BJ (cell line): ENCODE measurements at regions of chr2 and their contacts with region 1.

Region 1: GRCh38 chr2:237581751-237582746 is 8.5 kb downstream of the RAB17 start:
- DNase-seq: no peak
- H3K4me3 ChIP-seq: 0 out of 2 replicates have a peak overlapping the region, but pooled peaks have one; percentile 15
- H3K27me3 ChIP-seq: peaks cover 3% of the 10 kb centered on the region; the same call in 1 of the 2 replicates
- CTCF ChIP-seq: peak; percentile 55

Region 2: GRCh38 chr2:237092920-237093781 is 488.9 kb before region 1 on chr2:
- CTCF ChIA-PET with region 1: interaction called, 3 read pairs
- POLR2A ChIA-PET with region 1: interaction called, 11 read pairs
- DNase-seq: no peak
- H3K4me3 ChIP-seq: no peak overlapping the region
- H3K27me3 ChIP-seq: no peaks in the 10 kb centered on the region
- CTCF ChIP-seq: peak; percentile 69

Region 3: DNA sequence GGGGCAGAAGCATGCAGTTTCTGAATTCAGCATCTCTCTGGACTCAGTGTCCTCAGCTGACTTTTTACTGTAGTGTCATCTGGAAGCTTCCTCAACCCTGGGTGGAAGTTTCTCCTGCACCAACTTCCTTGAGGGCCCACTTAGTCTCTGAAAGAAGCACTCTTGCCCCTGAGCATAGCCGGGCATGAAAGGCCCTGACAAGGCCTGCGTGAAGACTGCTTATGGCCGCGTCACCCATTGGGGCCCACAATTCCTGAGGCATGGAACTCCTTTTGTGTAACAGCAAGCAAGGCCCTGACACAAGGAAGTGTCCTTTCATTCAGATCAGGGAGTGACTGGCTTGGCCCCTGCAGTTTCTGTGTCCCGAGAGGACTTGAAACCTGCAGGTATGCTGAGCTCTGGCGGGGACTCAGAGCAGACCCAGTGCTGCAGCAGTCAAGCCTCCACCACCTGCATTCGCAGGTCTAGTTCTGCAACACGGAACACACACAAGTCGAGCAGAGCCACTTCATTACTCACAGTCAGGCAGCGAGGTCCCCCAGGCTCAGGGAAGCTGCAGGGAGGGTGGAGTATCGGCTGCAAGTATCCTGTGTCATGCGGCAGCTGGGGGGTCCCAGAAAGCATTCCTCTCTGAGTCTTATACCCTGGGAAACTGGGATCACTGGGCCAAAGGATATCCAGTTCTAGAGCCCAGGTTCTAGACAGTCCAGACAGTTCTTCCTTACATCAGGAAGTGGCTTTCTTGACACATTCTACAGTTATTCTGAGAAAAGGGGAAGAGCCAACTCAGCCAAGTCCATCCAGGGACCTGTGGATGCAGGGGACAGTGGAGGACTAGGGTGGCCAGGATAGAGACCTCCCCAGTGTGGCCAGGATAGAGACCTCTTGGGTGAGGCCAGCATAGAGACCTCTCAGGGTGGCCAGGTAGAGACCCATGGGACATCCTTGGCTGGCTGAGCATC is 51.3 kb before region 1 on chr2:
- CTCF ChIA-PET with region 1: no interaction called
- POLR2A ChIA-PET with region 1: no interaction called
- DNase-seq: no peak
- H3K4me3 ChIP-seq: no peak overlapping the region
- H3K27me3 ChIP-seq: no peaks in the 10 kb centered on the region
- CTCF ChIP-seq: no peak

Region 4: DNA sequence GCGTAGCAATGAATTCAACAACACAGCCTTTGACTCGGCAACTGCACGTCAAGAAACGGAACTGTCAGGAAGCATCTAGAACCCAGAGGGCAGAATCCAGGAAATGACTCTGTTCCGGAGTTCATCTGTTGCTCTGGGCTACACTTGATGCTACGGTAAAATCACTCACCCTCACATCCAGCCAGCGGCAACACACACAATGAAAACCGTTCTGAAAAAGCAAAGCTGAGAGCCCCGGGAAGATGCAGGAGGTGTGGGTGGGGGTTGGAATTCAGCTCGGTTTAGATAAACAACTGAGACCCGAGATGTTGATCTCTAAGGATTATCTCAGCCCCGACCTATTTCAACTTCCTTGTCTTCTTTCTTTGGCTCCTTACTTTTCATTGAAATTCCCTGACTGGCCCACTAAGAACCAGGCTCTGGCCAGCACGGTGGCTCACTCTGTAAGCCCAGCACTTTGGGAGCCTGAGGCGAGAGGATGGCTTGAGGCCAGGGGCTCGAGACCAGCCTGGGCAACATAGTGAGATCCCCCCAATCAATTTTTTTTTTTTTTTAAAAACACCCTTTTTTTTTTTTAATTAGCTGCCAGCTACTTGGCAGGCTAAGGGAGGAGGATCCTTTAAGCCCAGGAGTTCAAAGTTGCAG is 21.8 kb after region 1 on chr2:
- CTCF ChIA-PET with region 1: interaction called, 12 read pairs
- POLR2A ChIA-PET with region 1: no interaction called
- DNase-seq: no peak
- H3K4me3 ChIP-seq: no peak overlapping the region
- H3K27me3 ChIP-seq: no peaks in the 10 kb centered on the region
- CTCF ChIP-seq: no peak

Region 5: DNA sequence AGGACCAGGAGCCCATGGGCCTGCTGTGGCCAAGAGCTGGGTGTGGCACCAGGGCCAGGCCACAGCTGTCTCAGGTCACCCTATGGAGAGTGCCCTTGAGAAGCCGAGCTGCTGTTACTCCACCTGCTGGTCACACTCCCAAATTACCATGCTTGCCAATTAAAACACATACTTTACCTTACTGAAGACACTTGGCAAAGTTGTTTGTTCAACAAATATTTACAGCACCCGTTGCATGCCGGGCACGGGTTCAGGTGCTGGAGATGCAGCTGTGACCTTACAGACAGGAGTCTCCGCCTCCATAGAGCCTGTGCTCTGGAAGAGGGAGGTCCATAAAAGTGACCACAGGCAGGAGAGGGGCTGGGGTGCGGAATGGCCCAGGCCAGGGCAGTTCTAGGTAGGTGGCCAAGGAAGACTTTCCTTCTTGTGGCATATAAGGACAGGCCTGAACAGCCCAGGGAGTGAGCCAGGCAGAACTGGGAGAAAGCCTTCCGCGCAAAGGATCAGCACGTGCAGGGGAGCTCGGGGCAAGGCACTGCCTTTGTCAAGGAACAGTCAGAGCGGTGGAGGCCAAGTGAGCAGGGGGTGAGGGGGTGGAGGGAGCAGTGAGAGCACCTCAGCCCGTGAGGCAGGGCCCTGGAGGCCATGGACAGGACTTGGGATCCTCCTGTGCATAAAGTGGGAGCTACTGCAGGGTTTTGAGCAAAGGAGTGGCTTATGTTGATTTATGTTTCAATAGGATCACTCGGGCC is 192.9 kb after region 1 on chr2:
- CTCF ChIA-PET with region 1: interaction called, 32 read pairs
- POLR2A ChIA-PET with region 1: no interaction called
- DNase-seq: no peak
- H3K4me3 ChIP-seq: no peak overlapping the region
- H3K27me3 ChIP-seq: no peaks in the 10 kb centered on the region
- CTCF ChIP-seq: peak; percentile 70